HEK293 (cell line): ENCODE measurements at regions of chr16 and their contacts with region 1.

Region 1: DNA sequence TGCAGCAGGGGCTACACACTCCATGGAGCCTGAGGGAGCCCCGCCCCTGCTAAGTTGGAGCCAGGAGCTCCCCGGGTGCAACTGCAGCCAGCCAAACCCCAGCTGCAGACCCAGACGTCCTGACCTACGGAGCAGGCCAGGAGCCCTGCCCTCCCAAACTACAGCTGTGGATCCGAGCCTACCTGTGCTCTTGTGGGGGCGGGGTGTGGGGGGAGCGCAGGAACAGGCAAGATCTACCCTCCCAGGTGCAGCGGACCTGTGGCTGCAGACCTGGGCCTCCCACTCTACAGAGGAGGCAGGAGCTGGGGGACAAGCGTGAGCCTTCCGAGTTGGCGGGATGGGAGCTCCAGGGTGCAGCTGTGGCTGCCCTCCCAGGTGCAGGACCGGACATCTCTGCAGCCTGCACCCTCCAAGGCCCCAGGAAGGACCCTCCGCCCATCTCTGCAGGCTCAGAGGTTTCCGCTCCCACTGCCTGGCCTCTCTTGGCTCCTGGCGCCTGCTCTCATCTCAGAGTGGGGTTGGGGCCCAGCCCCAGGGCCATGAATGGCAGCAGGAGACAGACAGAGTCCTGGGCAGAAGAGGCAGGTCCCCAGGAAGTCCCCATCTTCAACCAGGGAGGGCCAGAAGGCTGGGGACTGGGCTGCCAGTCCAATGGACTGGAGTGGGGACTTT is 29.8 kb upstream of the MYLK3 start:
- H3K4me3 ChIP-seq: no peak overlapping the region
- H3K27ac ChIP-seq: no peak overlapping the region
- H3K4me1 ChIP-seq: no peaks in the 10 kb centered on the region
- CTCF ChIP-seq: no peak

Region 2: GRCh38 chr16:46757339-46758050 is 20.4 kb before region 1 on chr16:
- CTCF ChIA-PET with region 1: no interaction called
- POLR2A ChIA-PET with region 1: interaction called, 10 read pairs
- H3K4me3 ChIP-seq: no peak overlapping the region
- H3K27ac ChIP-seq: no peak overlapping the region
- H3K4me1 ChIP-seq: 0 out of 2 replicates have a peak, but pooled peaks cover 3% of the 10 kb centered on the region
- CTCF ChIP-seq: no peak